ENCODE measurements at regions of chr11 and their contacts with region 1.

Region 1: DNA sequence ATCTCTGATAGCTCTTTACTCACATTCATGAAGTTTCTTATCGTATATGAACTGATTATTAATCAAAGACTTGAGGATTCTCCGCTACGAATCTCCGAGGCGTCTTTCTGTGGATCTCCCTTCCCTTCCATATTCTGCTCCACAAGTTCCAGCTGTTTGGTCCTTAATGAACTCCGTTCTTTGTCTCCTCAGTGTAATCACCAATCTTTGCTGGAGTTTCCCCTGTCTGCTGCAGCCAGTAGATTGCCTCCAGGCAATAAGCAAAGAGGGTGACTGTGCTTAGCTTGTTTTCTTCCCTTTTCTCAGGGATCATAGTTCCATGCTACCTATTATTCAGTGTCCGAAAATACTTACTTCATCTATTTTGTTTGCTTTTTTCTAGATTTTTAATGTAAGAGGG is 169.6 kb upstream of the FOLH1 start:
- DNase-seq: no peak
- ATAC-seq: no peak
- H3K4me3 ChIP-seq: no peak overlapping the region
- H3K27ac ChIP-seq: no peak overlapping the region
- H3K4me1 ChIP-seq: no peaks in the 10 kb centered on the region
- H3K27me3 ChIP-seq: no peaks in the 10 kb centered on the region
- CTCF ChIP-seq: no peak

Region 2: GRCh38 chr11:49405743-49406142 is 27.8 kb after region 1 on chr11:
- CTCF ChIA-PET with region 1: interaction called, 10 read pairs
- POLR2A ChIA-PET with region 1: no interaction called
- intact Hi-C with region 1: no loop called
- DNase-seq: no peak
- ATAC-seq: no peak
- H3K4me3 ChIP-seq: no peak overlapping the region
- H3K27ac ChIP-seq: no peak overlapping the region
- H3K4me1 ChIP-seq: no peaks in the 10 kb centered on the region
- H3K27me3 ChIP-seq: no peaks in the 10 kb centered on the region
- CTCF ChIP-seq: no peak

Region 3: DNA sequence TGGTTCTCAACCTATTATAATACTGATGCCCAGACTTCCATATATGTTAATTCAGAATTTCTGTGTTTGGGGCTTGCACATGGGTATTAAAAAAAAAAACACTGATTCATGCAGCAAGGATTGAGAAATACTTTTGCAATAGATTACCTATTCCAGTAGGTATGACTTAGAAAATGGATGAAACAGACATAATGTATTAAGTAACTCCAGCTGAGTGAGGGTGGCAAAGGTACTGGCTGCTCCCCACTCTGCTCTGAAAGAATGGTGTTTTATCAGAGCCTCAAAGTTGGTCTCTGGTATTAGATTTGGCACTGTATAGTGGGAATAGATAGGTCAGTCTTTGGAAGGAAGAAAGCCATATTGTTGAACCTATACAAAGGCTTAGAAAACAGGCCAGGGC is 64.7 kb after region 1 on chr11:
- CTCF ChIA-PET with region 1: no interaction called
- POLR2A ChIA-PET with region 1: no interaction called
- intact Hi-C with region 1: no loop called
- DNase-seq: no peak
- ATAC-seq: no peak
- H3K4me3 ChIP-seq: no peak overlapping the region
- H3K27ac ChIP-seq: no peak overlapping the region
- H3K4me1 ChIP-seq: no peaks in the 10 kb centered on the region
- H3K27me3 ChIP-seq: no peaks in the 10 kb centered on the region
- CTCF ChIP-seq: no peak